Ascending aorta (tissue), 2 donors: ENCODE measurements at regions of chr13 and their contacts with region 1.

Region 1: DNA sequence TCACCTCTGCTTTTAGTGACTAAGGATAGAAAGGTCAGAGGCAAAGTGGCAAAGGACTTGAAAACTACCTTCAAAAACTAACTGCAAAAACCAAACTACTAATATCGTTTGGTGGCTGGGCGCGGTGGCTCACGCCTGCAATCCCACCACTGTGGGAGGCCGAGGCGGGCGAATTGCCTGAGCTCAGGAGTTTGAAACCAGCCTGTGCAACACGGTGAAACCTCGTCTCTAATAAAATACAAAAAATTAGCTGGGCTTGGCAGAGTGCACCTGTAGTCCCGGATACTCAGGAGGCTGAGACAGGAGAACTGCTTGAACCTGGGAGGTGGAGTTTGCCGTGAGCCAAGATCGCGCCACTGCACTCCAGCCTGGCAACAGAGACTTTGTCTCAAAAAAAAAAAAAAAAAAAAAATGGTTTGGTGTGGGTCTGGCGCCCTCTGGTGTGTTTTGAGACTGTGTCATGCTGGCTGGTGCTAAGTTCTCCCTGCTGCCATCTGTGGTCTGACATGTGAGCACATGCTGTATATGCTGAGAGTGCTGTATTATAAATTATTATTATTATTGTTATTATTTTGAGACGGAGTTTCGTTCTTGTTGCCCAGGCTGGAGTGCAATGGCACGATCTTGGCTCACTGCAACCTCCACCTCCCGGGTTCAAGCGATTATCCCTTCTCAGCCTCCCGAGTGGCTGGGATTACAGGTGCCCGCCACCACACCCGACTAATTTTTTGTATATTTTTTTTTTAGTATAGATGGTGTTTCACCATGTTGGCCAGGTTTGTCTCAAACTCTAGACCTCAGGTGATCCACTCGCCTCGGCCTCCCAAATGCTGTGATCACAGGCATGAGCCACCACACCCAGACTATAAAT is 36.0 kb upstream of the RNF17 start:
- DNase-seq: peak in 1 of 2 donors; percentile 73
- H3K4me3 ChIP-seq: no peak overlapping the region
- H3K27ac ChIP-seq: no peak overlapping the region
- H3K4me1 ChIP-seq: no peaks in the 10 kb centered on the region
- H3K27me3 ChIP-seq: no peaks in the 10 kb centered on the region
- CTCF ChIP-seq: peak; percentile 62 to 82 (median 63)

Region 2: DNA sequence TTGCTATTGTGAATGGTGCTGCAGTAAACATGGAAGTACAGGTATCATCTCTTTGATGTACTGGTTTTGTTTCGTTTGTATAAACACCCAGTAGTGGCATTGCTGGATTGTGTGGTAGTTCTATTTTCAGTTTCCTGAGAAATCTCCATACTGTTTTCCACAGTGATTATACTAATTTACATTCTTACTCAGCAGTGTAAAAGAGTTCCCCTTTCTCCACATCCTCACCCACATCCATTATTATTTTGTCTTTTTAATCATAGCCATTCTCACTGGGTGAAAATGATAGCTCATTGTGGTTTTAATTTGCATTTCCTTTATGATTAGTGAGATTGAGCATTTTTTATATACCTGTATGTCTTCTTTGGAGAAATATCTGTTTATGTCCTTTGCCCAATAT is 153.1 kb before region 1 on chr13:
- intact Hi-C with region 1: loop called (anchors 2 kb)
- DNase-seq: no peak
- H3K4me3 ChIP-seq: no peak overlapping the region
- H3K27ac ChIP-seq: no peak overlapping the region
- H3K4me1 ChIP-seq: no peaks in the 10 kb centered on the region
- H3K27me3 ChIP-seq: no peaks in the 10 kb centered on the region
- CTCF ChIP-seq: no peak

Region 3: GRCh38 chr13:24683838-24684599 is 43.9 kb before region 1 on chr13:
- intact Hi-C with region 1: loop called (anchors 1 kb)
- DNase-seq: no peak
- H3K4me3 ChIP-seq: no peak overlapping the region
- H3K27ac ChIP-seq: no peak overlapping the region
- H3K4me1 ChIP-seq: peaks cover 6 to 26% of the 10 kb centered on the region in 2 donors
- H3K27me3 ChIP-seq: peaks cover 7% of the 10 kb centered on the region
- CTCF ChIP-seq: peak; percentile 55 to 78 (median 60)

Region 4: GRCh38 chr13:24827799-24828198 is 99.8 kb after region 1 on chr13:
- intact Hi-C with region 1: no loop called
- DNase-seq: no peak
- H3K4me3 ChIP-seq: no peak overlapping the region
- H3K27ac ChIP-seq: no peak overlapping the region
- H3K4me1 ChIP-seq: no peaks in the 10 kb centered on the region
- H3K27me3 ChIP-seq: no peaks in the 10 kb centered on the region
- CTCF ChIP-seq: no peak